PC-9 (cell line): ENCODE measurements at regions of chr6 and their contacts with region 1.

Region 1: DNA sequence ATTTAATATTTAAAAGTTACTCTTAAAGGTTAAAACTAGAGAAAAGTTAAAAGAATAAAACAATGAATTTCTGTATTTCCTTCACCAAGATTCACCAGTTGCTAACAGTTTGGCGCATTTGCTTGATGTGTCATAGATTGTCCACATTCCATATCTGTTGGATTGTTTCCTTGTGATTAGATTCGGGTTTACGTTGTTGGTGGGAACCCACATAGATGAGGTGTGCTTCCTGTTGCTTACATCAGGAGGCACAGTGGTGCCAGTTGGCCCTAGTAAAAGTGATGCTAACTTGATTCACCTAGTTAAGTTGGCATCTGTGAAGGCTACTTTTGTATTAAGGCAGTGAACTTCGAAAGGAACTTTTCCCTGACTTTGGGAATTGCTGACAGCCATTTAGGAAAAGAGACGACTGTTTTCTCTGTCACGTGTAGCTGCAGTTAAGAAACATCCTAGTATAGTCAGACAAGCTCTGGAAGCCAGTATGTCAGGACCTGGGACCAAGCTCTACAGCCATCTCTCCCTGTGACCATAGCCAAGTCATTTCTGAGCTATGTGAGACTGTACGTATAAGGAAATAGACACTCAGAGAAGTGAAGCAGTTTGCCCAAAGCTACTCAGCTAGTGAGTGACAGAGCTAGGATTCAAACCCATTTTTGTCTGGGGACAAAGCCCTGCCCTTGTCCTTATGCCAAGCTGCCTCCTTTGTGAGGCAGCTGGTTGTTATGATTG is 49.0 kb downstream of the PPARD start:
- DNase-seq: peak; percentile 58 to 97
- H3K4me3 ChIP-seq: peak overlapping the region; percentile 47; the same call in 1 of the 2 replicates
- H3K27ac ChIP-seq: peak overlapping the region; percentile 100
- H3K4me1 ChIP-seq: peaks cover 57% of the 10 kb centered on the region
- H3K27me3 ChIP-seq: no peaks in the 10 kb centered on the region
- CTCF ChIP-seq: peak; percentile 29; the same call in 1 of the 2 replicates

Region 2: DNA sequence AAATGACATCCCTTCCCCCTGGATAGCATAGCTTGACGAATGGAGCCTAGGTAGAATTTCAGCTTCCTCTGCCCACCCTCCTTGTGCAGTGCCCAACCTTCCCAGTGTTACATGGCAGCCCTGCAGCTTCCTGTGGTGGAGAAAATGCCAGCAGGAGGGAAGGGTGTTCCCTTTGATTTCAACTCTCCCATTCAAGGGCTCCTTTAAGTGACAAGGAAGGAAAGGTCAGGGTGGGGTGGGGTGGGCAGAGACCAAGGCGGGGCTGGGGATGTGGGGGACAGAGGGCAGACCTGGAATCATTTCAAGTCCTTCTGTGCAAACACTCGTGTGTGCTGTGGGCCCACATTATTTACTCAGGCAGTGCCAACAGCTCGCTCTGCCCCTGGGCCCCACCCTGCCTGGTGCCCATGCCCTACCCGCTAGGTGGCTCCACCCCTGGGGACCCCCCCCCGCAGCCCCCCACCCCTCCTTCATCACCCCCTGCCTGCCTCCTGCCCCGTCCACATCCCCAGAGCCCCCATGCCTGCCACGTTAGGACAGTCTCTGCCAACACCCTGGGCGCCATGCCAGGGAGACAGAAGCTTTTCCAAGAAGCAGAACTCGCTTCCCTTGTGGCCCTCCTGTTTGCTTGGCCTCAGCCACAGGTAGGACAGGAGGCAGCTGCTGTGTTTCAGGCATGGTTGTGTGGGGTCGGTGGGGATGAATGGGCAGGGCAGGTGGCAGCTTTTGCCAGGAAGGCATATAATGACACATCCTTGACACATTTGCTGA is 844.7 kb before region 1 on chr6:
- CTCF ChIA-PET with region 1: interaction called, 10 read pairs
- POLR2A ChIA-PET with region 1: no interaction called
- intact Hi-C with region 1: no loop called
- DNase-seq: peak; percentile 62 to 73
- H3K4me3 ChIP-seq: no peak overlapping the region
- H3K27ac ChIP-seq: no peak overlapping the region
- H3K4me1 ChIP-seq: peaks cover 51% of the 10 kb centered on the region
- H3K27me3 ChIP-seq: no peaks in the 10 kb centered on the region
- CTCF ChIP-seq: no peak

Region 3: GRCh38 chr6:35280903-35281302 is 110.5 kb before region 1 on chr6:
- CTCF ChIA-PET with region 1: no interaction called
- POLR2A ChIA-PET with region 1: no interaction called
- intact Hi-C with region 1: no loop called
- DNase-seq: no peak
- H3K4me3 ChIP-seq: no peak overlapping the region
- H3K27ac ChIP-seq: no peak overlapping the region
- H3K4me1 ChIP-seq: no peaks in the 10 kb centered on the region
- H3K27me3 ChIP-seq: no peaks in the 10 kb centered on the region
- CTCF ChIP-seq: no peak

Region 4: GRCh38 chr6:35370124-35370741 is 21.2 kb before region 1 on chr6:
- CTCF ChIA-PET with region 1: no interaction called
- POLR2A ChIA-PET with region 1: interaction called, 3 read pairs
- intact Hi-C with region 1: loop called (anchors 1 kb)
- DNase-seq: peak; percentile 73 to 76
- H3K4me3 ChIP-seq: no peak overlapping the region
- H3K27ac ChIP-seq: peak overlapping the region; percentile 80
- H3K4me1 ChIP-seq: peaks cover 34% of the 10 kb centered on the region
- H3K27me3 ChIP-seq: no peaks in the 10 kb centered on the region
- CTCF ChIP-seq: no peak

Region 5: DNA sequence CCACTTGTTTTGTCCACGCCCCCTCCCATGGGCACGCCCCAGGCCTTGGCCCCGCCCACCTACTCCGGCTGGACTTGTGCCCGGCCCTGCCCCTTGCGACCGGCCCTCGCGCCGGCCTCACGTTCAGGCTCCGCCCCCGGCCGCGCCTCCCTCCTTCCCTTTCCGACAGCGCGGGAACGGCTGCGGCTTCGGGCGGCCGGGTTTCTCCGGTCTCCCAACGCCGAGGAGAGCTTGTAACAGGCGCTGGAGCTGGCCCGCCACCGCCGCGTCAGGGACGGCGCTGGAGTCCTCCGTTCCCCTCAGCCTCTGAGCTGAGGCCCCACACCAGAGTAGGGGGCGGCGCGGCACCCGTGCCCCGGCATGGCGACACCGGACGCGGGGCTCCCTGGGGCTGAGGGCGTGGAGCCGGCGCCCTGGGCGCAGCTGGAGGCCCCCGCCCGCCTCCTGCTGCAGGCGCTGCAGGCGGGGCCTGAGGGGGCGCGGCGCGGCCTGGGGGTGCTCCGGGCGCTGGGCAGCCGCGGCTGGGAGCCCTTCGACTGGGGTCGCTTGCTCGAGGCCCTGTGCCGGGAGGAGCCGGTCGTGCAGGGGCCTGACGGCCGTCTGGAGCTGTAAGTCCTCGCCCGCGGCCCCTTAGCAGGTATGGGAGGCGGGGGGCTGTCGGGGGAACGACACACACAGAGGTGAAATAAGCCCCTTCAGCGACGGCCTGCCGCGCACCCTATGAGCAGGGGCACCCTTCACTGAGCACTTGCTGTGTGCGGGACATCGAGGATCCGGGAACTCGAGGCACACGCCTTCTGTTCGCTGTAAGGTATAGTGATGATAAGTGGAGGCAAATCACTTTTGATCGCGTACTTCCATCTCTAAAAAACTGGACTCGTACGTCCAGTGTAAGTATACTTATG is 61.0 kb after region 1 on chr6 and contains the start of gene FANCE:
- CTCF ChIA-PET with region 1: no interaction called
- POLR2A ChIA-PET with region 1: no interaction called
- intact Hi-C with region 1: loop called (anchors 5 kb)
- DNase-seq: peak; percentile 76 to 97
- H3K4me3 ChIP-seq: peak within 1 kb of the TSS; percentile 65
- H3K27ac ChIP-seq: no peak within 1 kb of the TSS
- H3K4me1 ChIP-seq: peaks cover 21% of the 10 kb centered on the region
- H3K27me3 ChIP-seq: no peaks in the 10 kb centered on the region
- CTCF ChIP-seq: no peak
- total RNA-seq, gene FANCE: 6.9 and 9.6 TPM in 2 replicates

Region 6: DNA sequence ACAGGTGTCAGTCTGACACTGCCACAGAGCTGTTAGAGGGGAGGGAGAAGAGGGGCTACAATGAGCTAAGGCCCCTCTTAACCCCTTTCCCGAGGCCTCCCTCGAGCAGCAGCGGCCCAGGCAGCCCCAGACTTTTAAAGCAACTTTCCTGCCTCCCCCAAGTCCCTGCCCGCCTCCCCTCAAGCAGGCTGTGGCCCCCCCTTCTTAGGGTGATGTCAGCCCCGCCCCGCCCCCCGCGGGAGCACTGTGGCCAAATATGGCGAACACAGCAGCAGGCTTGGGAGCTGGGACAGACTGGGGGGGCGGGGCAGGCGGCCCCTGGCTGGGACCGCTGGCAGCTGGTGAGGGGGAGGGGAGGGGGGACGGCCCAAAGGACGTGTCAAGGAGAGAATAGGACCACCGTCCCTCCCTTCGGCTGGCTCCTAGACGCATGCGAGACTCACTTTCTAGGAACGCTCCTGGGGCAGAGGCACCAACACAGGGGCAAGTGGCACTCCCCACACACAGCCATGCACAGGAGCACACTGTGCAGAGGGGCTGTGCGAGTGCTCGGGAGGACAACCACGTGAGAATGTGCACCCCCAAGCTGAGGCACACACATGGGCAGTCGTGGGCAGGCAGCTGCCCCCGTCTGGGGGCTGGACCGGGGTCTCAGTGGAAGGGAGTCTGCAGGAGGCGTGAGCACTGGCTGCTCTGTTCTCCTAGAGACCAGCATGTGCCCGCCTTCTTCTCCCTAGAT is 98.8 kb after region 1 on chr6:
- CTCF ChIA-PET with region 1: no interaction called
- POLR2A ChIA-PET with region 1: no interaction called
- intact Hi-C with region 1: loop called (anchors 1 kb)
- DNase-seq: no peak
- H3K4me3 ChIP-seq: no peak overlapping the region
- H3K27ac ChIP-seq: no peak overlapping the region
- H3K4me1 ChIP-seq: peaks cover 67% of the 10 kb centered on the region
- H3K27me3 ChIP-seq: no peaks in the 10 kb centered on the region
- CTCF ChIP-seq: no peak